T-cell (primary cell): ENCODE measurements at regions of chr11 and their contacts with region 1.

Region 1: DNA sequence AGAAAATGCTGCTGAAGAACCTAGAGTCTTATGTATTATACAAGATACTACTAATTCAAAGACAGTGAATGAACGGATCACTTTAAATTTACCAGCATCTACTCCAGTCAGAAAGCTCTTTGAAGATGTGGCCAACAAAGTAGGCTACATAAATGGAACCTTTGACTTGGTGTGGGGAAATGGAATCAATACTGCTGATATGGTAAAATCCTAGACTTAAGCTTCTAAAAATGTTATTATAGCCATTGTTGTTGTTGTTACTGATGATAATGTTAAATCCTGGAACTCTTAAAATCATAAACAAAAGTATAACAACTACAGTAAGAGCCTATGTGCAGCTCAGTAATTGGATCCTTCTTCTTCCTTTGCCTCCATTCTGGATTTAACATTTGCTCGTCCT is 38.4 kb downstream of the USP47 start:
- DNase-seq: no peak
- ATAC-seq: no peak
- H3K4me3 ChIP-seq: no peak overlapping the region
- H3K4me3 Mint-ChIP-seq: no peak overlapping the region
- H3K27ac ChIP-seq: no peak overlapping the region
- H3K27ac Mint-ChIP-seq: no peak overlapping the region
- H3K4me1 ChIP-seq: peaks cover 5 to 9% of the 10 kb centered on the region in 2 experiments
- H3K4me1 Mint-ChIP-seq: peaks cover 59 to 68% (median 68%) of the 10 kb centered on the region in 3 donors
- H3K27me3 ChIP-seq: no peaks in the 10 kb centered on the region
- H3K27me3 Mint-ChIP-seq: no peaks in the 10 kb centered on the region

Region 2: GRCh38 chr11:11848891-11849746 is 31.1 kb before region 1 on chr11:
- CTCF ChIA-PET with region 1: interaction called, 3 to 11 read pairs
- POLR2A ChIA-PET with region 1: interaction called in 1 of 2 experiments, 3 read pairs
- DNase-seq: peak in 34 of 35 experiments; percentile 26 to 85 (median 56)
- ATAC-seq: peak; percentile 89 to 94 (median 90)
- H3K4me3 ChIP-seq: no peak overlapping the region
- H3K4me3 Mint-ChIP-seq: peak overlapping the region in 2 of 3 donors; percentile 56 to 59
- H3K27ac ChIP-seq: no peak overlapping the region
- H3K27ac Mint-ChIP-seq: peak overlapping the region; percentile 30 to 84
- H3K4me1 ChIP-seq: peaks cover 18 to 64% of the 10 kb centered on the region in 2 experiments
- H3K4me1 Mint-ChIP-seq: peaks cover 54 to 58% (median 55%) of the 10 kb centered on the region in 3 donors
- H3K27me3 ChIP-seq: no peaks in the 10 kb centered on the region
- H3K27me3 Mint-ChIP-seq: no peaks in the 10 kb centered on the region